ENCODE measurements at regions of chr14 and their contacts with region 1.

Region 1: GRCh38 chr14:75709207-75709812 is 48.3 kb downstream of the TTLL5 start:
- DNase-seq: peak; percentile 67 to 88 (median 74)
- ATAC-seq: peak; percentile 71 to 72
- H3K4me3 ChIP-seq: no peak overlapping the region
- H3K27ac ChIP-seq: no peak overlapping the region
- H3K4me1 ChIP-seq: peaks cover 5% of the 10 kb centered on the region
- H3K27me3 ChIP-seq: no peaks in the 10 kb centered on the region

Region 2: GRCh38 chr14:75771595-75771994 is 62.3 kb after region 1 on chr14:
- intact Hi-C with region 1: loop called in 1 of 4 experiments (anchors 10 kb)
- DNase-seq: no peak
- ATAC-seq: no peak
- H3K4me3 ChIP-seq: no peak overlapping the region
- H3K27ac ChIP-seq: no peak overlapping the region
- H3K4me1 ChIP-seq: no peaks in the 10 kb centered on the region
- H3K27me3 ChIP-seq: no peaks in the 10 kb centered on the region

Region 3: DNA sequence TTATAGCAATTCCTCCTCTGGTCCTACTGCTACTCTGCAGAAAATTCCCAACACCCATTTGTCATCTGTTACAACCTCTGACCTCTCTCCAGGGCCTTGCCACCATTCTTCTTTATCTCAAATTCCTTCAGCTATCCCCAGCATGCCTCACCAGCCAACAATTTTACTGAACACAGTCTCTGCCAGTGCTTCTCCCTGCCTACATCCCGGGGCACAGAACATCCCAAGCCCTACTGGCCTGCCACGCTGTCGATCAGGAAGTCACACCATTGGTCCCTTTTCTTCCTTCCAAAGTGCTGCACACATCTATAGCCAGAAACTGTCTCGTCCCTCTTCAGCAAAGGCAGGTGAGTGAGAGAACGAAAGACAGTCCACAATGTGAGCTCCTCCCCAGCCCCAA is 73.9 kb after region 1 on chr14:
- intact Hi-C with region 1: loop called in 2 of 4 experiments (anchors 10 kb)
- DNase-seq: peak in 2 of 3 donors; percentile 63 to 66
- ATAC-seq: peak; percentile 82 to 92
- H3K4me3 ChIP-seq: no peak overlapping the region
- H3K27ac ChIP-seq: peak overlapping the region; percentile 54
- H3K4me1 ChIP-seq: peaks cover 3% of the 10 kb centered on the region
- H3K27me3 ChIP-seq: no peaks in the 10 kb centered on the region

Region 4: GRCh38 chr14:75794615-75795038 is 85.3 kb after region 1 on chr14:
- intact Hi-C with region 1: loop called in 2 of 4 experiments (anchors 5 to 10 kb)
- DNase-seq: no peak
- ATAC-seq: peak; percentile 95
- H3K4me3 ChIP-seq: no peak overlapping the region
- H3K27ac ChIP-seq: peak overlapping the region; percentile 43
- H3K4me1 ChIP-seq: peaks cover 3% of the 10 kb centered on the region
- H3K27me3 ChIP-seq: no peaks in the 10 kb centered on the region

Region 5: DNA sequence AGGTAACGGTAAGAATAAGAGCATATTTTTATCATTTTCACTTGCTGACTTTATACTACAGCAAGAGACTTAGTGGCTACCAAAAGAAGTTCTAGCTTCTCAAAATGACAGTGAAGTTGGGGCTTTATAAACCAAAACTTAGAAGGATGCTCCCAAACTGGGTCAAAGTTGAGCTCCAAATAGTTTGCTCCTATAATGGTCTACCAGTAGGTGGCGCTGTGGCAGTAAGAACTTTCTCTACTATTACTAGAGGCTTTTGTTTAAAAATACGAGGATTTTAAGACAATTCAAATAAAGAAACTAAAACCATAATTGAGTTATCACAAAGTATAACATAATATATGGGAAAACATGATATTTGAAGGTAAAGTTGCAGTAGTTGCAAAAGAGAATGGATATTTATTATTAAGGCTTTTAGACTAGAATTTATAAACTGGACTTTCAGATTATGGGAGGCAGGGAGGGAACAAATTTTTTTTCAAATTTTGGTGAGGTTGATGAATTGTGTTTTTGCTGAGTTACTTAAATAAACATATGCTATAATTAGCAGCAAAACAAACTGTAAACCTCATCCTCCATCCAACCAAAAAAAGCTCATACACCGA is 197.5 kb after region 1 on chr14:
- intact Hi-C with region 1: loop called in 1 of 4 experiments (anchors 10 kb)
- DNase-seq: peak in 2 of 3 donors; percentile 37 to 63
- ATAC-seq: peak; percentile 59 to 68
- H3K4me3 ChIP-seq: no peak overlapping the region
- H3K27ac ChIP-seq: no peak overlapping the region
- H3K4me1 ChIP-seq: peaks cover 3% of the 10 kb centered on the region
- H3K27me3 ChIP-seq: no peaks in the 10 kb centered on the region

Region 6: DNA sequence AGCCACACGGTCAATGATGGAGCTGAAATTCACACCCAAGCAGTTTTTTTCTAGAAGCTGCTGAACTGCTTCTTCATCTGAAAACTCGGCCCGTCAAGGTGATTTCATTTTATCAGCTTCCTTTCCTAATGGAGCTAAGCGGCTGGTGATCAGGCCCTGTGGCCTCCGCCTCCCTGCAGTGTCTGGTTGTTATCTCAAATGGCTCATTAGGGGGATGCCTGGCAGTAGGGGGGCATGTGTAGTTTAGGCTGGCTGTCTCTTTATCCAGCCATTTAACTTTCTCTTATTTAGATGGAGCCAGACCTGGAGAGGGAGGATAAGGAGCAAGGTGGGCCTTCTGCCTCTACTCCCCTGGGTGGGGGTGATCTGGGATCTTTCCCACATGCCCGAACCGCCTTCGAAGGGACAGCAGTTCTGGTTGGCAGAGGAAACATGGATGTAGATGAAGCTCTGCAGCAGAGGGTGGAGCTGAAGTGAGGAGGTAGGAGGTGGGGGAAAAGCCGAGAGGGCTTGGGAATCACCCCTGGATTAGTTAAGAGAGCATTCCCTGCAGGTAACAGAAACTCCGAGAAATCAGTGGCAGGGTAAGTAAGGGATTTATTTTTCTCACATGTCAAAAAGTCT is 208.1 kb after region 1 on chr14:
- intact Hi-C with region 1: no loop called
- DNase-seq: no peak
- ATAC-seq: no peak
- H3K4me3 ChIP-seq: no peak overlapping the region
- H3K27ac ChIP-seq: no peak overlapping the region
- H3K4me1 ChIP-seq: no peaks in the 10 kb centered on the region
- H3K27me3 ChIP-seq: no peaks in the 10 kb centered on the region

Region 7: GRCh38 chr14:75982266-75983018 is 273.1 kb after region 1 on chr14:
- intact Hi-C with region 1: loop called (anchors 2 to 5 kb)
- DNase-seq: peak; percentile 87 to 95 (median 94)
- ATAC-seq: peak; percentile 71 to 75
- H3K4me3 ChIP-seq: peak overlapping the region; percentile 70
- H3K27ac ChIP-seq: peak overlapping the region; percentile 95
- H3K4me1 ChIP-seq: peaks cover 13% of the 10 kb centered on the region
- H3K27me3 ChIP-seq: no peaks in the 10 kb centered on the region

Region 8: GRCh38 chr14:76022991-76023390 is 313.7 kb after region 1 on chr14:
- intact Hi-C with region 1: no loop called
- DNase-seq: no peak
- ATAC-seq: no peak
- H3K4me3 ChIP-seq: no peak overlapping the region
- H3K27ac ChIP-seq: no peak overlapping the region
- H3K4me1 ChIP-seq: peaks cover 1% of the 10 kb centered on the region
- H3K27me3 ChIP-seq: no peaks in the 10 kb centered on the region

Measured in right cardiac atrium (tissue), 5 donors.